ENCODE measurements at regions of chr3 and their contacts with region 1.

Region 1: DNA sequence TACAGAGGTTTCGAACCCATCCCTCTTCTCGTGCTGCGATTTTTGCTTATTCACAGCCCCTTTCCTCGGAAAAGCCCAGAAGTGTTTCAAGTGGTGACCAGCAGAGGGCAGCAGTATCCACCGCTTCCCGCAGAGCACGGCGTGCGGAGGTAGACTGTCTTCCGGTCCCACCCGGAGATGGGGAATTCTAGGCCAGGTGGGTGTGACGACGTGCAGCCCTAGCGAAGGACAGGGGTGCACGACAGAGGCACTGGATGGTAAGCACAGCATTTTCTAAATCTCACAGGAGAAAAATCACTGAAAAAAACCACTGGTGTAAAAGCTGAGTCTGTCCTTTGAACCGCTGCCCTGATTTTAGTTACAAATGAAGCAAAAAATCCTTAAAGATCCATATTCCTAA is 7.4 kb upstream of the PSMD6 start:
- DNase-seq: peak; percentile 49
- ATAC-seq: peak; percentile 98
- H3K4me3 ChIP-seq: peak overlapping the region in 1 of 3 experiments; percentile 23; a peak in 1 of 6 replicates
- H3K27ac ChIP-seq: no peak overlapping the region
- H3K4me1 ChIP-seq: 0 out of 2 replicates have a peak, but pooled peaks cover 6% of the 10 kb centered on the region
- H3K27me3 ChIP-seq: no peaks in the 10 kb centered on the region; a peak in 1 of 5 replicates
- CTCF ChIP-seq: peak; percentile 96
- EP300 ChIP-seq: no peak
- POLR2A ChIP-seq: no peak
- RAD21 ChIP-seq: peak; percentile 89

Region 2: DNA sequence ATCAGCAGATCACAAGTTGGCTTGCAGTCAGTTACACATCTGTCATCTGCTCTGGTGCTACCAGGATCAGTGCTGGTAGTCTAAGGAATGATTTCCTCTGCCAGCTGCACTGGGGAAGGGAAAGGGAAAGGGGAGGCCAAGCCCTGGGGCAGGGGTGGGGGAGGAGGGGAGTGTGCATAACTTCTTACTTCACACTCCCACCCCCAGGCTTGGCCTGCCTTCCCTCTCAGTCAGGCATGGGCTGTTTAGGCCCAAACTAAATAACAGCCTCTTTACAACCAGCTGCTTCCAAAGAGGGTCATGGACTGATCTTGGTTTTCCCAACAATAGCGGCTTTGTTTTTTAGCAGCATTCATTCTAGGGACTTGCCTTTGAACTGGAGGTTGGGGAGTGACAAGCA is 78.7 kb after region 1 on chr3:
- CTCF ChIA-PET with region 1: no interaction called
- POLR2A ChIA-PET with region 1: no interaction called
- in situ Hi-C with region 1: no loop called
- intact Hi-C with region 1: loop called (anchors 2 kb)
- DNase-seq: peak; percentile 89
- ATAC-seq: peak; percentile 89
- H3K4me3 ChIP-seq: no peak overlapping the region
- H3K27ac ChIP-seq: no peak overlapping the region
- H3K4me1 ChIP-seq: peaks cover 43% of the 10 kb centered on the region
- H3K27me3 ChIP-seq: no peaks in the 10 kb centered on the region; a peak in 1 of 5 replicates
- CTCF ChIP-seq: no peak
- EP300 ChIP-seq: peak in 1 of 2 experiments; percentile 44; a peak in 1 of 4 replicates
- POLR2A ChIP-seq: no peak
- RAD21 ChIP-seq: no peak

Region 3: GRCh38 chr3:64166584-64167162 is 135.9 kb after region 1 on chr3:
- CTCF ChIA-PET with region 1: interaction called, 14 read pairs
- POLR2A ChIA-PET with region 1: no interaction called
- in situ Hi-C with region 1: loop called (anchors 5 kb)
- intact Hi-C with region 1: loop called (anchors 1 kb)
- DNase-seq: peak; percentile 26
- ATAC-seq: peak; percentile 33; the same call in 1 of the 3 replicates
- H3K4me3 ChIP-seq: no peak overlapping the region
- H3K27ac ChIP-seq: no peak overlapping the region
- H3K4me1 ChIP-seq: peaks cover 2% of the 10 kb centered on the region
- H3K27me3 ChIP-seq: no peaks in the 10 kb centered on the region
- CTCF ChIP-seq: peak; percentile 51
- EP300 ChIP-seq: no peak
- POLR2A ChIP-seq: no peak
- RAD21 ChIP-seq: 0 out of 2 replicates have a peak, but pooled peaks have one; percentile 14

Region 4: DNA sequence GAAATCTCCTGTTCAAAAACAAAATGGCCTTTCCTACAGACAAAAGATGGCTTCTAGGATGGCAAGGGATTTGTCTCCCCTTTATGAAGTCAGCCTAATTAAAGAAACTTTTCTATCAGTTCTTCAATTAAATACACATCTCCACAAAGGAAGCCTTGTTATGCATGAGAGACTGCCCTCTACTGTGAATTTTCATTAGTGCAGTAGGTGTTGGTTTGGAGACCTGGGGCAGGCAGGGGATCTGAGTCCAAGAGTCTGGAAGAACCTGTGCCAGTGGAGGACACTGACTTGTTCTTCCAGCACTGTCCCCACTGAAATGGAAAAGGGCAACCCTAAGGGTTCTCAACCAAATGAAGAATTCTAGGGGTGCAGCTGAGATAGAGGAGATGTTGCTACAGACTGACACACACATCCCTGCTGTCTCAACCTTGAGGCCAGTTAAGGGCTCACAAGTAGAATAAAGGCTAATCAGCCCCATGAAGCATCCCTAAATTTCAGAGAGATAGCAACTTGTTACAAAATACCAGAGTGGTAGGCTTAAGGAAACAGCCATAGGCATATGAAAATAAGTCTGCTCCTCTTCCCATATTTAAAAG is 368.6 kb after region 1 on chr3:
- CTCF ChIA-PET with region 1: interaction called, 18 read pairs
- POLR2A ChIA-PET with region 1: no interaction called
- in situ Hi-C with region 1: loop called (anchors 5 kb)
- intact Hi-C with region 1: no loop called
- DNase-seq: peak; percentile 21
- ATAC-seq: peak; percentile 65
- H3K4me3 ChIP-seq: no peak overlapping the region
- H3K27ac ChIP-seq: no peak overlapping the region
- H3K4me1 ChIP-seq: no peaks in the 10 kb centered on the region
- H3K27me3 ChIP-seq: peaks cover 0 to 3% of the 10 kb centered on the region in 2 experiments; a peak in 1 of 5 replicates
- CTCF ChIP-seq: peak; percentile 63
- EP300 ChIP-seq: no peak
- POLR2A ChIP-seq: no peak
- RAD21 ChIP-seq: peak; percentile 49; the same call in 1 of the 2 replicates

Region 5: GRCh38 chr3:64484289-64484992 is 453.7 kb after region 1 on chr3:
- CTCF ChIA-PET with region 1: interaction called, 44 read pairs
- POLR2A ChIA-PET with region 1: no interaction called
- in situ Hi-C with region 1: loop called (anchors 5 kb)
- intact Hi-C with region 1: loop called (anchors 1 kb)
- DNase-seq: peak; percentile 41
- ATAC-seq: peak; percentile 99
- H3K4me3 ChIP-seq: no peak overlapping the region
- H3K27ac ChIP-seq: no peak overlapping the region
- H3K4me1 ChIP-seq: peaks cover 5% of the 10 kb centered on the region; the same call in 1 of the 2 replicates
- H3K27me3 ChIP-seq: peaks cover 2 to 22% of the 10 kb centered on the region in 2 experiments; a peak in 3 of 5 replicates
- CTCF ChIP-seq: peak; percentile 90
- EP300 ChIP-seq: no peak
- POLR2A ChIP-seq: no peak
- RAD21 ChIP-seq: peak; percentile 81